ENCODE measurements at regions of chr7 and their contacts with region 1.

Region 1: DNA sequence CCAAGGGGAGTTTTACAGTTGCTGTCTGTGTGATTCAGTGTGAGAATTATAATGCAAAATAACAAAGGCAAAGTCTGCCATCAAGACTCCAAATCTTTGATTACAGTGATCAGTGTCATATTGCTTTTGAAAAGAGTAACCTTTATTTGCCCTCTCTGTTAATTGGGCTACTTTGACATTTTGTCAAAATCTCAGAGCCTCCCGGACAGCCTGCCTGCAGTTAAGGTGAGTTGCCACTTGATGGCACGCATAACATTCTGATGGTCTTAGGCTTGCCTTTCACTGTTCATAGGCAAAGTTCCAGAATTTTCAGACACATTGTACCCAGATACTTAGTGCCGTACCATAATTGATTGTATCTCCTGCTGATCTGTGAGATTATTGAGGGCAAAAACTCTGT is 253.5 kb downstream of the ABCA13 start:
- DNase-seq: peak in 1 of 2 experiments; percentile 39
- H3K4me3 ChIP-seq: no peak overlapping the region
- H3K4me3 Mint-ChIP-seq: no peak overlapping the region
- H3K27ac Mint-ChIP-seq: no peak overlapping the region
- H3K4me1 ChIP-seq: no peaks in the 10 kb centered on the region
- H3K4me1 Mint-ChIP-seq: peaks cover 9% of the 10 kb centered on the region
- H3K27me3 ChIP-seq: no peaks in the 10 kb centered on the region
- H3K27me3 Mint-ChIP-seq: peaks cover 6% of the 10 kb centered on the region
- CTCF ChIP-seq: peak; percentile 60 to 71

Region 2: DNA sequence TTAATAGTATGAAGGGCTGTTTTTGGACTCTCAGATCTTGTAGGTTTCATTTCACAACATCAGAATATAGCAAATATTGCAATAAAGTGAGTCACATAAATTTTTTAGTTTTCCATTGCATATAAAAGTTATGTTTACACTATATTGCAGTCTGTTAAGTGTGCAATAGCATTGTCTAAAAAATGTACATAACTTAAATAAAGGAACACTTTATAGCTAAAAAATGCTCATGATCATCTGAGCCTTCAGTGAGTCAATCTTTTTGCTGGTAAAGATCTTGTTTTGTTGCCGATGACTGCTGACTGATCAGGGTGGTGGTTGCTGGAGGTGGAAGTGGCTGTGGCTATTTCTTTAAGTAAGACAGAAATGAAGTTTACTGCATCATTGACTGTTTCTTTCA is 211.5 kb before region 1 on chr7:
- CTCF ChIA-PET with region 1: no interaction called
- POLR2A ChIA-PET with region 1: no interaction called
- intact Hi-C with region 1: no loop called
- DNase-seq: no peak
- H3K4me3 ChIP-seq: no peak overlapping the region
- H3K4me3 Mint-ChIP-seq: no peak overlapping the region
- H3K27ac Mint-ChIP-seq: no peak overlapping the region
- H3K4me1 ChIP-seq: peaks cover 12% of the 10 kb centered on the region; the same call in 1 of the 2 replicates
- H3K4me1 Mint-ChIP-seq: peaks cover 19% of the 10 kb centered on the region
- H3K27me3 ChIP-seq: no peaks in the 10 kb centered on the region
- H3K27me3 Mint-ChIP-seq: peaks cover 3% of the 10 kb centered on the region
- CTCF ChIP-seq: no peak

Region 3: GRCh38 chr7:48360574-48360973 is 64.2 kb before region 1 on chr7:
- CTCF ChIA-PET with region 1: no interaction called
- POLR2A ChIA-PET with region 1: no interaction called
- intact Hi-C with region 1: no loop called
- DNase-seq: no peak
- H3K4me3 ChIP-seq: no peak overlapping the region
- H3K4me3 Mint-ChIP-seq: no peak overlapping the region
- H3K27ac Mint-ChIP-seq: no peak overlapping the region
- H3K4me1 ChIP-seq: no peaks in the 10 kb centered on the region
- H3K4me1 Mint-ChIP-seq: no peaks in the 10 kb centered on the region
- H3K27me3 ChIP-seq: no peaks in the 10 kb centered on the region
- H3K27me3 Mint-ChIP-seq: peaks cover 22% of the 10 kb centered on the region
- CTCF ChIP-seq: no peak

Region 4: GRCh38 chr7:48497521-48497920 is 72.8 kb after region 1 on chr7:
- CTCF ChIA-PET with region 1: no interaction called
- POLR2A ChIA-PET with region 1: no interaction called
- intact Hi-C with region 1: no loop called
- DNase-seq: no peak
- H3K4me3 ChIP-seq: no peak overlapping the region
- H3K4me3 Mint-ChIP-seq: no peak overlapping the region
- H3K27ac Mint-ChIP-seq: no peak overlapping the region
- H3K4me1 ChIP-seq: no peaks in the 10 kb centered on the region
- H3K4me1 Mint-ChIP-seq: no peaks in the 10 kb centered on the region
- H3K27me3 ChIP-seq: peaks cover 1% of the 10 kb centered on the region; the same call in 1 of the 2 replicates
- H3K27me3 Mint-ChIP-seq: peaks cover 32% of the 10 kb centered on the region
- CTCF ChIP-seq: no peak

Region 5: GRCh38 chr7:48528646-48529045 is 103.9 kb after region 1 on chr7:
- CTCF ChIA-PET with region 1: no interaction called
- POLR2A ChIA-PET with region 1: no interaction called
- intact Hi-C with region 1: loop called (anchors 1 kb)
- DNase-seq: peak; percentile 23 to 48
- H3K4me3 ChIP-seq: no peak overlapping the region
- H3K4me3 Mint-ChIP-seq: no peak overlapping the region
- H3K27ac Mint-ChIP-seq: no peak overlapping the region
- H3K4me1 ChIP-seq: no peaks in the 10 kb centered on the region
- H3K4me1 Mint-ChIP-seq: no peaks in the 10 kb centered on the region
- H3K27me3 ChIP-seq: no peaks in the 10 kb centered on the region
- H3K27me3 Mint-ChIP-seq: peaks cover 5% of the 10 kb centered on the region
- CTCF ChIP-seq: peak in 1 of 2 experiments; percentile 22

Region 6: DNA sequence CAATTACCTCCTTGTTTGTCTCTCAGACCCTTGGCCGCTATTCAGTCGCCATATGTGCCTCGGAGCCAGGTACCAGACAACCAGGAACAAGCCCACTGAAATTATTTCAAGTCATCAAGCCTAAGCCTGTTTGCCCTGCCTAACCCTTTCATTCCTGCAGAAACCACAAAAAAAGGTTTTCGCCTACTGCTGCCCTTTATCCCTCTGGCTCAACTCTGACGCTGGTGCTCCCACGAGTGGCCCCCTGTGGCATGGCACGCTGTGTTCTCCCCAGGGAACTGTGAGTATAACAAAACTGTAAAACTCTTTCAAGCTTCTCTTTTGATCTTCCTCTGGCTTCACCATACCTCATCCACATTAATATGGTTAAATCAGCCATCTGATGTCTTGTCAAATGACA is 283.9 kb after region 1 on chr7:
- CTCF ChIA-PET with region 1: no interaction called
- POLR2A ChIA-PET with region 1: no interaction called
- intact Hi-C with region 1: loop called (anchors 10 kb)
- DNase-seq: no peak
- H3K4me3 ChIP-seq: no peak overlapping the region
- H3K4me3 Mint-ChIP-seq: no peak overlapping the region
- H3K27ac Mint-ChIP-seq: no peak overlapping the region
- H3K4me1 ChIP-seq: no peaks in the 10 kb centered on the region
- H3K4me1 Mint-ChIP-seq: no peaks in the 10 kb centered on the region
- H3K27me3 ChIP-seq: no peaks in the 10 kb centered on the region
- H3K27me3 Mint-ChIP-seq: peaks cover 5% of the 10 kb centered on the region
- CTCF ChIP-seq: no peak

Region 7: DNA sequence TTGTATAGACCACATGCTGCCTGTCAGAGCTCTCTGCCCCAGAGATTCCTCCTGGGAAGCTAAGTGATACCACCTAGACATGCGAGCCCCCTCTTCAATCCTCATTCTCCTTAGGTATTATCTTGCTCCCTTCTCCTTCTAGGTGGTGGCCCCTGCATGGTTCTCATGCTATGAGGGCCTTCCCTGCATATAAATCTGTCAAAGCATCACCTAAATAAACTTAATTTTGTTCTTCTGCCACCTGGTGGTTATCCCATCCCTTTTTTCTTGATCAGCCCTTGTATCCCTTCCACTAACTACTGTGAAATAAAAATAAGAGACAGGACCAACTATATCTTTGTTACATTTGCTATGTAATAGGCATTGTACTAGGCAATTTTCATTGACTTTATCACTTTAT is 741.7 kb after region 1 on chr7:
- CTCF ChIA-PET with region 1: no interaction called
- POLR2A ChIA-PET with region 1: no interaction called
- intact Hi-C with region 1: loop called (anchors 10 kb)
- DNase-seq: peak in 1 of 2 experiments; percentile 9
- H3K4me3 ChIP-seq: no peak overlapping the region
- H3K4me3 Mint-ChIP-seq: no peak overlapping the region
- H3K27ac Mint-ChIP-seq: no peak overlapping the region
- H3K4me1 ChIP-seq: no peaks in the 10 kb centered on the region
- H3K4me1 Mint-ChIP-seq: no peaks in the 10 kb centered on the region
- H3K27me3 ChIP-seq: no peaks in the 10 kb centered on the region
- H3K27me3 Mint-ChIP-seq: peaks cover 13% of the 10 kb centered on the region
- CTCF ChIP-seq: peak; percentile 23 to 49